Body of pancreas (tissue), 4 donors: ENCODE measurements at regions of chr22 and their contacts with region 1.

Region 1: DNA sequence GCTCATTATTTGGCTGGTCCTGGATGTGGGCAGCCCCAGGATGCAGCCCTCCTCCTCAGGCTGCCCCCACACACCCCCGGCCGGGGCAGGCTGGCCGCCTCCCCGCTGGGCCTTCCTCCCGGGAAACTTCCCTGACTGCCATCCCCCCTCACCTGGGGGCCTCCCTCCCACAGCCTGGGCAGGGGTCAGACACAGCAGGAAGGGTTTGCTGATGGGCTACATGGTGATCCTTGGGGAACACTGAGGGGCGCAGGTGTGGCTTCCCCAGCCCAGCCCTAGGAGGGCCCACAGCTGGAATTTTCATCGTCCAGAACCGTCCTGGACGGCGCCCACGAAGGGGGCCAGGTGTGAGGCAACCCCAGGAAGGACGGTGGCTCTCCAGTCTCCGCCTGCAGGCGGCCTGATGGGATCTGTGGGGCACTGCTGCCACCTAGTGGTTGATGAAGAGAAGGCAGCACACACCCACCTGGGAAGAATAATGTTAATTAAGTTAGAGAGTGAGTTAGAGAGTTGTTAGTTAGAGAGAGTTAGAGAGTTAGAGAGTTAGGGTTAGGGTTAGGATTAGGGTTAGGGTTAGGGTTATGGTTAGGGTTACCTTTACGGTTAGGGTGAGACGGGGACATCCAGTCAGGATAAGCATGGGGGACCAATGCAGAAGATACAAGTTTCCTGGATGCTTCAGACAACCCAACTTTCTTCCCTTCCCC is 75.9 kb upstream of the PRR5 start:
- DNase-seq: peak; percentile 66 to 74 (median 70)
- ATAC-seq: peak; percentile 74
- H3K4me3 ChIP-seq: no peak overlapping the region
- H3K27ac ChIP-seq: no peak overlapping the region
- H3K4me1 ChIP-seq: no peaks in the 10 kb centered on the region
- H3K27me3 ChIP-seq: peaks cover 0 to 4% of the 10 kb centered on the region in 2 donors
- CTCF ChIP-seq: peak; percentile 97 to 100 (median 99)
- POLR2A ChIP-seq: no peak

Region 2: GRCh38 chr22:43993027-43993760 is 632.9 kb before region 1 on chr22:
- intact Hi-C with region 1: loop called (anchors 5 kb)
- DNase-seq: peak; percentile 26 to 62 (median 42)
- ATAC-seq: peak; percentile 58
- H3K4me3 ChIP-seq: no peak overlapping the region
- H3K27ac ChIP-seq: no peak overlapping the region
- H3K4me1 ChIP-seq: no peaks in the 10 kb centered on the region
- H3K27me3 ChIP-seq: no peaks in the 10 kb centered on the region
- CTCF ChIP-seq: peak; percentile 65 to 94 (median 76)
- POLR2A ChIP-seq: no peak

Region 3: GRCh38 chr22:44486538-44486937 is 139.6 kb before region 1 on chr22:
- intact Hi-C with region 1: no loop called
- DNase-seq: no peak
- ATAC-seq: no peak
- H3K4me3 ChIP-seq: no peak overlapping the region
- H3K27ac ChIP-seq: no peak overlapping the region
- H3K4me1 ChIP-seq: no peaks in the 10 kb centered on the region
- H3K27me3 ChIP-seq: no peaks in the 10 kb centered on the region
- CTCF ChIP-seq: no peak
- POLR2A ChIP-seq: no peak

Region 4: GRCh38 chr22:45878051-45878781 is 1252.1 kb after region 1 on chr22:
- intact Hi-C with region 1: no loop called
- DNase-seq: peak in 2 of 4 donors; percentile 9 to 11
- ATAC-seq: no peak
- H3K4me3 ChIP-seq: no peak overlapping the region
- H3K27ac ChIP-seq: no peak overlapping the region
- H3K4me1 ChIP-seq: peaks cover 10% of the 10 kb centered on the region
- H3K27me3 ChIP-seq: no peaks in the 10 kb centered on the region
- CTCF ChIP-seq: no peak
- POLR2A ChIP-seq: no peak